Vagina (tissue), 2 donors: ENCODE measurements at regions of chr19 and their contacts with region 1.

Region 1: GRCh38 chr19:48321622-48322591 is 3.4 kb upstream of the EMP3 start:
- DNase-seq: peak in 1 of 2 donors; percentile 98
- H3K4me3 ChIP-seq: peak overlapping the region; percentile 67 to 82
- H3K27ac ChIP-seq: peak overlapping the region; percentile 100
- H3K4me1 ChIP-seq: peaks cover 54% of the 10 kb centered on the region
- H3K27me3 ChIP-seq: no peaks in the 10 kb centered on the region
- CTCF ChIP-seq: no peak
- POLR2A ChIP-seq: peak in 1 of 2 donors; percentile 90

Region 2: DNA sequence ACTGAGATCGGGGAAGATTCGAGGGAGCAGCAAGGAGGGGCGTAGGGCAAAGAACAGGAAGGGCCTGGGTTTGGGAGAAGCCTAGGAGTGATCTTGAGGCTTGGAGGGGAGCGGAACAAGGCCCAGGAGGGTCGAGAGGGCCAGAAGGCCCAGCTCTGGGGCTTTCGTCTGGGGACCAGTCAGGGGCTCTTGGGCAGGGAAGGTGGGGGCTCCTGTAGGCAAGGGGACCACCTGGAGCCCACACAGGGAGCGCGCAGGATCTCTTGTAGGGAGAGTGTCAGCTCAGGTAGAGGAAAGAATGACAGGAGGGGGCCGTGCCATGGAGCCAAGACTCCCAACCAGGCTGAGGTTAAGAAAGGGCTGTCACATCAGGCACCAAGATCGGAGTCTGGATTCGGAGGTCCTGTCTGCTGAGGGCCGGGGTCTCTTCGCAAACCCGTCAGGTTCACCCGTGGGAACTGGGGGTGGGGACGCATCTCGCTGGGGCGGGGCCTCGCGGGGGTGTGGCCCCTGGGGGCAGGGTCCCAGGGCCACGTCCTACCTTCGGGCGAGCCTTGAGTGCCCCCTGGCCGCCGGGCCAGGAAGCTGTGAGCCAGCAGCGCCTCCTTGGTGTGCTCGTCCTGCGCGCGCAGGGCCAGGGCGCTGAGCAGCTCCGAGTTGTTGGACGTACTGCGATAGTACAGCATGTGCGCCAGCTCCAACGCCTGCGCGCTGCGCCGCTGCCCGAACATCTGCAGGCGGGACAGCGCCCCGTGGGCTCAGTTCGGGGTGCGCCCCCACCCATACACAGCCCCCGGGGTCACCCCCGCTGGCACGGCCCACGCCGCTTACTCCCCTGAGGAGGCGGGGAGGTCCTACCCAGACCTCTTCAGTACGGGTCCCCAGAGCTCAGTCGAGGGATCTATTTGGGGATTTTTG is 11.8 kb after region 1 on chr19:
- intact Hi-C with region 1: loop called (anchors 2 kb)
- DNase-seq: no peak
- H3K4me3 ChIP-seq: peak overlapping the region; percentile 38 to 45
- H3K27ac ChIP-seq: peak overlapping the region; percentile 82
- H3K4me1 ChIP-seq: peaks cover 46% of the 10 kb centered on the region
- H3K27me3 ChIP-seq: no peaks in the 10 kb centered on the region
- CTCF ChIP-seq: peak; percentile 50 to 78 (median 61)
- POLR2A ChIP-seq: no peak